CD8-positive, alpha-beta T cell (primary cell): ENCODE measurements at regions of chr10 and their contacts with region 1.

Region 1: GRCh38 chr10:89474452-89474851 is 60.1 kb downstream of the IFIT5 start:
- DNase-seq: no peak
- ATAC-seq: no peak
- H3K4me3 ChIP-seq: no peak overlapping the region
- H3K4me3 Mint-ChIP-seq: no peak overlapping the region
- H3K27ac ChIP-seq: no peak overlapping the region
- H3K27ac Mint-ChIP-seq: no peak overlapping the region
- H3K4me1 ChIP-seq: no peaks in the 10 kb centered on the region
- H3K4me1 Mint-ChIP-seq: no peaks in the 10 kb centered on the region
- H3K27me3 ChIP-seq: peaks cover 0 to 3% of the 10 kb centered on the region in 2 experiments
- H3K27me3 Mint-ChIP-seq: peaks cover 9% of the 10 kb centered on the region
- CTCF ChIP-seq: no peak

Region 2: DNA sequence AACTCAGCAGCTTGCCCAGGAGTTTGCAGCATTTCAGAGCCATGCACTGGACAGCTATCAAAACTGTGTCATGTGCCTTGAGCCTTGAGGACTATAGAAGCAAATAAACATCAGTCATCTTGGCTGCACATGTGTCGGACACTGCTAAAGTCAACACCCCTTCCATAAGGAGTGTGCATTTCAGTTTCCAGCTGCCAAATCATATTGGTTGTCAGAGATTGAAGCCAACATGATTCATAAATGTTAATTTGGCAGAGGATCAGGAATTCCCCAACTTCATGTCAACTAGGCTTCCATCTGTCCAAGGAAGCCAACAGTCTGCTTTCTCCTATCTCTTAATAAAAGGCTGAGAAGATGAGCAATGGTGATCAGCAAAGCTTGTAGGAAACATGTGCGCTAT is 28.1 kb after region 1 on chr10:
- CTCF ChIA-PET with region 1: no interaction called
- POLR2A ChIA-PET with region 1: no interaction called
- intact Hi-C with region 1: loop called in 1 of 2 experiments (anchors 1 kb)
- DNase-seq: no peak
- ATAC-seq: no peak
- H3K4me3 ChIP-seq: no peak overlapping the region
- H3K4me3 Mint-ChIP-seq: no peak overlapping the region
- H3K27ac ChIP-seq: no peak overlapping the region
- H3K27ac Mint-ChIP-seq: no peak overlapping the region
- H3K4me1 ChIP-seq: no peaks in the 10 kb centered on the region
- H3K4me1 Mint-ChIP-seq: peaks cover 5% of the 10 kb centered on the region
- H3K27me3 ChIP-seq: no peaks in the 10 kb centered on the region
- H3K27me3 Mint-ChIP-seq: peaks cover under 1% of the 10 kb centered on the region
- CTCF ChIP-seq: no peak